Head of caudate nucleus (tissue), 42 donors: ENCODE measurements at regions of chr17 and their contacts with region 1.

Region 1: DNA sequence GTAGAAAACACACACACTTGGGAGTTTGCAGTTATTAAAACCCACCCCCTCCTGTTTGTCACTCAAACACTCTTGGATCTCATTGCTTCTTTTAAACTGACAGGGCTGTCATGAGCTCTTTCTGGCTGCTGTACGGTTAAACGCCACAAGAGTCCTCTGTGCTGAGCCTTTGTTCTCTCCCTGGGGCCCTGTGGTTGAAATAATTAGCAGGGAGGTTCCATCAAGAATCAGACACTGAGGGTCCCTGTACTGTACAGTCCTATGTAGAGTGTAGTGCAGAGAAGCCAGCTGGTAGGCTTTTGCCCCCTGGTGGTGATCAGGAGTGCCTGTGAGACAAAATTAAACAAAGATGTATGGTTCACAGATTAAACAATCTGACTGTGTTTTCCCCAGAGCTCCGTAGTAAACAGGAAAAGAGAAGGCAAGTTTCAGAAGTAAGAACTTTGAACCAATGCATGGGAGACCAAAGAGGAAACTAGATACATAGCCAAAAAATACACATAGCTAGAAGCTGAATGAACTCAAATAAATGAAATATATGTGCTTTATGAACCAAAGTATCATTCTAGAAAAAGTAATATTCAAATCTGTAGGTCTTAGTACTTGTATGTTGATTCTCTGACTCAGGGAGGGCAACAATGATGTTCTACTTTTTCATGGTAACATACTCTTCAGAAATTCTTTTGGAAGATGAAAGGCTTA is 1.4 kb upstream of the SSH2 start:
- DNase-seq: peak; percentile 60 to 94 (median 86)

Region 2: DNA sequence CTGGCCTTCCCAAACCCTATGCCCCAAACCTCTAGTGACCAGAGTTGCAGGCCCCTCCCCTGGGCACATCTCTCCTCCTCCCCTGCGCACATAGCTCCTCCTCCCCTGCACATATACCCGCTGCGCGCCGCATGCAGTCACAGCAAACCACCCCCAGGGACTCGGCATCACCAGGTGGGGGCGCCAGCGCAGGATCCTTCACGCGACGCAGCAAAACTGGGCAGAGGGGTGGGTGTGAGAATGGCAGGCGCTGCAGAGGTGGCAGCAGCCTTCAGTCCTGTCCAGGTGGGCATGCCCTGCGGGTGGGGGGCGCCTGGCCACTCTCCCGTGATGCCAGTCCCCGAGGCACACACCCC is 314.3 kb before region 1 on chr17:
- intact Hi-C with region 1: loop called (anchors 5 kb)
- DNase-seq: peak; percentile 78 to 96 (median 91)

Region 3: GRCh38 chr17:29807520-29808351 is 123.6 kb before region 1 on chr17:
- intact Hi-C with region 1: loop called (anchors 2 kb)
- DNase-seq: peak in 41 of 42 donors; percentile 12 to 93 (median 78)

Region 4: GRCh38 chr17:29870836-29871465 is 60.4 kb before region 1 on chr17:
- intact Hi-C with region 1: loop called (anchors 5 kb)
- DNase-seq: no peak